B cell (primary cell): ENCODE measurements at regions of chr17 and their contacts with region 1.

Region 1: GRCh38 chr17:4220655-4221054 is 43.1 kb downstream of the ANKFY1 start:
- DNase-seq: no peak
- ATAC-seq: no peak
- H3K4me3 ChIP-seq: no peak overlapping the region
- H3K4me3 Mint-ChIP-seq: no peak overlapping the region
- H3K27ac ChIP-seq: no peak overlapping the region
- H3K27ac Mint-ChIP-seq: no peak overlapping the region
- H3K4me1 ChIP-seq: no peaks in the 10 kb centered on the region
- H3K4me1 Mint-ChIP-seq: peaks cover 6% of the 10 kb centered on the region
- H3K27me3 ChIP-seq: no peaks in the 10 kb centered on the region
- H3K27me3 Mint-ChIP-seq: no peaks in the 10 kb centered on the region
- CTCF ChIP-seq: no peak

Region 2: GRCh38 chr17:3835410-3836229 is 385.0 kb before region 1 on chr17:
- CTCF ChIA-PET with region 1: no interaction called
- POLR2A ChIA-PET with region 1: no interaction called
- intact Hi-C with region 1: no loop called
- DNase-seq: no peak
- ATAC-seq: no peak
- H3K4me3 ChIP-seq: no peak overlapping the region
- H3K4me3 Mint-ChIP-seq: no peak overlapping the region
- H3K27ac ChIP-seq: no peak overlapping the region
- H3K27ac Mint-ChIP-seq: no peak overlapping the region
- H3K4me1 ChIP-seq: no peaks in the 10 kb centered on the region
- H3K4me1 Mint-ChIP-seq: peaks cover 2% of the 10 kb centered on the region
- H3K27me3 ChIP-seq: no peaks in the 10 kb centered on the region
- H3K27me3 Mint-ChIP-seq: no peaks in the 10 kb centered on the region
- CTCF ChIP-seq: no peak

Region 3: GRCh38 chr17:4249452-4250029 is 28.9 kb after region 1 on chr17:
- CTCF ChIA-PET with region 1: interaction called, 23 read pairs
- POLR2A ChIA-PET with region 1: interaction called, 4 read pairs
- intact Hi-C with region 1: no loop called
- DNase-seq: peak; percentile 45
- ATAC-seq: no peak
- H3K4me3 ChIP-seq: no peak overlapping the region
- H3K4me3 Mint-ChIP-seq: no peak overlapping the region
- H3K27ac ChIP-seq: peak overlapping the region in 1 of 2 donors; percentile 23
- H3K27ac Mint-ChIP-seq: no peak overlapping the region
- H3K4me1 ChIP-seq: peaks cover 0 to 5% of the 10 kb centered on the region in 2 donors
- H3K4me1 Mint-ChIP-seq: peaks cover 28% of the 10 kb centered on the region
- H3K27me3 ChIP-seq: no peaks in the 10 kb centered on the region
- H3K27me3 Mint-ChIP-seq: no peaks in the 10 kb centered on the region
- CTCF ChIP-seq: peak; percentile 76

Region 4: GRCh38 chr17:4326608-4327007 is 106.0 kb after region 1 on chr17:
- CTCF ChIA-PET with region 1: no interaction called
- POLR2A ChIA-PET with region 1: no interaction called
- intact Hi-C with region 1: no loop called
- DNase-seq: no peak
- ATAC-seq: no peak
- H3K4me3 ChIP-seq: no peak overlapping the region
- H3K4me3 Mint-ChIP-seq: no peak overlapping the region
- H3K27ac ChIP-seq: no peak overlapping the region
- H3K27ac Mint-ChIP-seq: no peak overlapping the region
- H3K4me1 ChIP-seq: peaks cover 0 to 2% of the 10 kb centered on the region in 2 donors
- H3K4me1 Mint-ChIP-seq: peaks cover 53% of the 10 kb centered on the region
- H3K27me3 ChIP-seq: no peaks in the 10 kb centered on the region
- H3K27me3 Mint-ChIP-seq: no peaks in the 10 kb centered on the region
- CTCF ChIP-seq: no peak

Region 5: GRCh38 chr17:4407851-4408250 is 187.2 kb after region 1 on chr17:
- CTCF ChIA-PET with region 1: interaction called, 178 read pairs
- POLR2A ChIA-PET with region 1: no interaction called
- intact Hi-C with region 1: loop called (anchors 1 kb)
- DNase-seq: no peak
- ATAC-seq: no peak
- H3K4me3 ChIP-seq: no peak overlapping the region
- H3K4me3 Mint-ChIP-seq: no peak overlapping the region
- H3K27ac ChIP-seq: no peak overlapping the region
- H3K27ac Mint-ChIP-seq: no peak overlapping the region
- H3K4me1 ChIP-seq: peaks cover 7 to 9% of the 10 kb centered on the region in 2 donors
- H3K4me1 Mint-ChIP-seq: peaks cover 8% of the 10 kb centered on the region
- H3K27me3 ChIP-seq: no peaks in the 10 kb centered on the region
- H3K27me3 Mint-ChIP-seq: no peaks in the 10 kb centered on the region
- CTCF ChIP-seq: no peak

Region 6: GRCh38 chr17:4420692-4421131 is 200.1 kb after region 1 on chr17:
- CTCF ChIA-PET with region 1: interaction called, 178 read pairs
- POLR2A ChIA-PET with region 1: no interaction called
- intact Hi-C with region 1: no loop called
- DNase-seq: peak; percentile 83
- ATAC-seq: peak; percentile 94
- H3K4me3 ChIP-seq: no peak overlapping the region
- H3K4me3 Mint-ChIP-seq: no peak overlapping the region
- H3K27ac ChIP-seq: no peak overlapping the region
- H3K27ac Mint-ChIP-seq: no peak overlapping the region
- H3K4me1 ChIP-seq: peaks cover 4% of the 10 kb centered on the region in 2 donors
- H3K4me1 Mint-ChIP-seq: peaks cover 3% of the 10 kb centered on the region
- H3K27me3 ChIP-seq: no peaks in the 10 kb centered on the region
- H3K27me3 Mint-ChIP-seq: no peaks in the 10 kb centered on the region
- CTCF ChIP-seq: peak; percentile 84

Region 7: DNA sequence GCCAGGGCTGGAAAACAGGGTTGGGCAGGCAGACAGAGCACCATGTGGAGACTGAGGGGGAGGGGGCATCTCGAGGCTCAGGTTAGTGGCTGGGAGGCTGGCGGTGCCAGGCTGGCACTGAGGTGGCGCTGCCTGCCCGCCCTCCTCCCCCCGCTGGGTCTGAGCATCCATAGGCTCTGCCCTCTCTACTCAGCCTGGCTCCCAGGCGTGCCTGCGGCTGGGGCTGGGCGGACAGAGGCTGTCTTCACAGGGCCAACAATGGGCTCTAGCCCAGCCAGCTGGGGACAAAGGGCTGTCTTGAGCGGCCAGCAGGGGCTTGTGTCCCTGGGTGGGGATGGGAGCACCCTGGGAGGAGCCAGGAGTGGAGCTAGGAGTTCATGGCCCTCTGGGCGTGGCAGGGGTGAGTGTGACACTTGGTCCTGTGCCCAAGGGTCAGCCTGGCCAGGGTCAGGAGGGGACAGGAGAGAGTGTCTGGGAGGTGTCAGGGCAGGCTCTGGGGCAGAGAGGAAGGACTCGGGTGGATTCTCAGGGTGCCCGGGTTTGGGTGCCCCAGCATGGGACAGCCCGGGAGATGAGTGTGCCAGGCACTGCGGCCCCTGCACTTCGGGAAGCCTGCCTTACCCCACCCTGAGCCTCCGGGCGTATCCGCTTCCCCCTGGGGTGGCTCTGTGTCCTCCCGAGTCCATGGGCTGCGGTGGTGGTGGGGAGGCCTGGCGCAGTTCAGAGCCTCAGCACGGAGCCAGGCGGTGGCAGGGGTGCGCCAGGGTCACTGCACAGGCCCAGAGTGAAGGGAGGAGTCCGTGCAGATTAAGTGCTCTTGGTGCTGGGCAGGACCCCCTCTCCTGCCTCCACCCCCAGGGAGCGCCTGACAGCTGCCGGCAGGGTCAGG is 313.6 kb after region 1 on chr17:
- CTCF ChIA-PET with region 1: no interaction called
- POLR2A ChIA-PET with region 1: no interaction called
- intact Hi-C with region 1: no loop called
- DNase-seq: no peak
- ATAC-seq: no peak
- H3K4me3 ChIP-seq: no peak overlapping the region
- H3K4me3 Mint-ChIP-seq: no peak overlapping the region
- H3K27ac ChIP-seq: no peak overlapping the region
- H3K27ac Mint-ChIP-seq: no peak overlapping the region
- H3K4me1 ChIP-seq: peaks cover 0 to 3% of the 10 kb centered on the region in 2 donors
- H3K4me1 Mint-ChIP-seq: peaks cover 2% of the 10 kb centered on the region
- H3K27me3 ChIP-seq: peaks cover 0 to 2% (median 0%) of the 10 kb centered on the region in 4 experiments
- H3K27me3 Mint-ChIP-seq: peaks cover 15% of the 10 kb centered on the region
- CTCF ChIP-seq: no peak